ENCODE measurements at regions of chr13 and their contacts with region 1.

Region 1: DNA sequence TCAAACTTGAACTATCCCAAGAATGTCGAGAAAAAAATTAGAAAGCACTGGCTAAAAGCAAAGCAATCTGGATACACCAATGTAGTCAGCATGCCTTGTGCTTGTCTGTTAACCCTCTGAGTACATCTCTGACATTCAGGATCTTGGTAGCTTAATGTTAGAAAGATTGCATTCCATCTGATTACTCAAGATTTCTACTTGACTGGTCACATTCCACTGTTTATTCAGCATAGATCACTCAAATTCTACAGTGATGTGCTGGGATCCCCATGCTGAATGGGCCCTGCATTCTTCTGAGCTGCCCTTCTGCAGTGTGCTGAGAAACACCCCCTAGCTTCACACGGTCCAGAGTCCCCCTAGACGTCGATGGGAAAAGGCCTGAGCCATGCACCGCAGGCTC is 295.4 kb upstream of the MAB21L1 start:
- DNase-seq: no peak
- ATAC-seq: no peak
- H3K4me3 ChIP-seq: no peak overlapping the region
- H3K27ac ChIP-seq: no peak overlapping the region
- H3K4me1 ChIP-seq: peaks cover 0 to 12% (median 0%) of the 10 kb centered on the region in 12 donors
- H3K27me3 ChIP-seq: no peaks in the 10 kb centered on the region
- CTCF ChIP-seq: no peak
- POLR2A ChIP-seq: no peak

Region 2: GRCh38 chr13:35744566-35745178 is 27.2 kb before region 1 on chr13:
- intact Hi-C with region 1: loop called in 1 of 10 experiments (anchors 5 kb)
- DNase-seq: no peak
- ATAC-seq: peak in 3 of 4 donors; percentile 62 to 84 (median 71)
- H3K4me3 ChIP-seq: no peak overlapping the region
- H3K27ac ChIP-seq: no peak overlapping the region
- H3K4me1 ChIP-seq: peaks cover 0 to 15% (median 0%) of the 10 kb centered on the region in 12 donors
- H3K27me3 ChIP-seq: no peaks in the 10 kb centered on the region
- CTCF ChIP-seq: no peak
- POLR2A ChIP-seq: no peak

Measured in heart left ventricle (tissue), 16 donors.